Naive thymus-derived CD8-positive, alpha-beta T cell (primary cell): ENCODE measurements at regions of chr17 and their contacts with region 1.

Region 1: GRCh38 chr17:4250887-4251286 is 12.9 kb downstream of the ANKFY1 start:
- DNase-seq: no peak
- ATAC-seq: no peak
- H3K4me3 Mint-ChIP-seq: no peak overlapping the region
- H3K27ac Mint-ChIP-seq: no peak overlapping the region
- H3K4me1 Mint-ChIP-seq: peaks cover 32 to 62% (median 55%) of the 10 kb centered on the region in 4 donors
- H3K27me3 Mint-ChIP-seq: no peaks in the 10 kb centered on the region

Region 2: GRCh38 chr17:4263282-4264215 is 12.7 kb after region 1 on chr17 and contains the start of gene ANKFY1:
- POLR2A ChIA-PET with region 1: interaction called, 10 read pairs
- DNase-seq: peak; percentile 96 to 99 (median 98)
- ATAC-seq: peak; percentile 97
- H3K4me3 Mint-ChIP-seq: peak within 1 kb of the TSS; percentile 89 to 97 (median 95)
- H3K27ac Mint-ChIP-seq: peak within 1 kb of the TSS; percentile 85 to 97 (median 94)
- H3K4me1 Mint-ChIP-seq: peaks cover 21 to 44% (median 40%) of the 10 kb centered on the region in 4 donors
- H3K27me3 Mint-ChIP-seq: no peaks in the 10 kb centered on the region
- polyA plus RNA-seq, gene ANKFY1: 9.9 to 13.7 (median 10.0) TPM